HCT116 (cell line): ENCODE measurements at regions of chr11 and their contacts with region 1.

Region 1: DNA sequence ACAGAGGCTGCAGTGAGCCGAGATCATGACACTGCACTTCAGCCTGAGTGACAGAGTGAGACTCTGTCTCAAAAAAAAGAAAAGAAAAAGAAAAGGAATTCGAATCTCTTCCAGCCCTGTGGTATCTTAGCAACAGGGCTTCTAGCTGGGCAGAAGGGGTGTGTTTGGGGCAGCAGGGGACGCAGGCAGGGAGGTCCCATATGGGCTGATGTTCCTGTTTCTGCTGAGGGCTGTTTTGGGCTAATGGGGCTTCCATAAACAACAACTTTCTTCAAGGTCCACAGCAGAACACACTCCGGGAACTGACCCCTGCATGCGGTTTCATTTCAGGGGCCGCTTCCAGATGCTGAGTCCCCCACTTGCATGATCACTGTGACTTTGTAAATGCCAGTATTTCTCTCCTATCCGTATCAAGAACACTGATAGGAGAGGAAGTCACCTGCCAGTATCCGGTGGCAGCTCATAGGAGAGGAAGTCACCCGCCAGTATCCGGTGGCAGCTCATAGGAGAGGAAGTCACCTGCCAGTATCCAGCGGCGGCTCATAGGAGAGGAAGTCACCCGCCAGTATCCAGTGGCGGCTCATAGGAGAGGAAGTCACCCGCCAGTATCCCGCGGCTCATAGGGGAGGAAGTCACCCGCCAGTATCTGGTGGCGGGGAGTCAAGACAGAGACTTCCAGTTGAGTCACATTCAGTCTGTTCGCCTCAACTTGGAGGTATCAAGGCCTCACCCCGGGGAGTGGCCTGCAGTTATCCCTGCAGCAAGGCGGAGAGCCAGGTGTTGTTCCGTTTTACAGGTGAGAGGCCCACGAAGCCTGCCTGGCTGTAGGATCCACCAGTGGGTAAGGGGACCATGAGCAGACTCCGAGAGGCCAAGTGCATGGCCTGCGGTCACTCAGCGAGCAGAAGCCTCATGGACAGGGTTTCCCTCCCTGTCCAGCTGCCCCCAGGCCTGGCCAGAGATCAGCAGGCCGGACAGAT is 8.3 kb upstream of the FGF19 start:
- DNase-seq: peak; percentile 75
- ATAC-seq: peak; percentile 88
- H3K4me3 ChIP-seq: peak overlapping the region; percentile 91 to 97
- H3K27ac ChIP-seq: peak overlapping the region; percentile 88
- H3K4me1 ChIP-seq: peaks cover 13 to 20% of the 10 kb centered on the region in 2 experiments
- H3K27me3 ChIP-seq: no peaks in the 10 kb centered on the region
- CTCF ChIP-seq: no peak
- POLR2A ChIP-seq: peak; percentile 90
- RAD21 ChIP-seq: no peak

Region 2: GRCh38 chr11:69700278-69701140 is 11.6 kb before region 1 on chr11:
- CTCF ChIA-PET with region 1: interaction called, 5 read pairs
- POLR2A ChIA-PET with region 1: interaction called, 12 read pairs
- RAD21 ChIA-PET with region 1: interaction called in 1 of 2 experiments, 5 read pairs
- intact Hi-C with region 1: no loop called
- DNase-seq: no peak
- ATAC-seq: peak; percentile 39
- H3K4me3 ChIP-seq: peak overlapping the region; percentile 0 to 40
- H3K27ac ChIP-seq: peak overlapping the region; percentile 80
- H3K4me1 ChIP-seq: peaks cover 46 to 68% of the 10 kb centered on the region in 2 experiments
- H3K27me3 ChIP-seq: no peaks in the 10 kb centered on the region
- CTCF ChIP-seq: no peak
- POLR2A ChIP-seq: no peak
- RAD21 ChIP-seq: no peak

Region 3: DNA sequence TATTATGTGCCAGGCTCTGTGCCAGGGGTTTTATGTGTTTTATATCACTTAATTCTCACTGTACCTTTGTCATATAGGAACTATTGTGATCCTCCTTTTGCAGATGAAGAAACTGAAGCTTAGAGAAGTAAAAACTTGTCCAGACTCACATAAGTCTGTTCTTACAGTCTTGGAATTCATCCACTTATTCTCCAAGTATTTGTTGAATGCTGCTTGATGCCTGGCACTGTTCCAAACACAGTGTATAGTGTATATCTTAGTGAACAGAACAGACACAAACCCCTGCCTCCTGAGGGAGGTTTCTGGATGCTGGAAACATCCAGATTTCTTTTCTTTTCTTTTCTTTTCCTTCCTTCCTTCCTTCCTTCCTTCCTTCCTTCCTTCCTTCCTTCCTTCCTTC is 136.1 kb after region 1 on chr11:
- CTCF ChIA-PET with region 1: no interaction called
- POLR2A ChIA-PET with region 1: no interaction called
- RAD21 ChIA-PET with region 1: no interaction called
- intact Hi-C with region 1: no loop called
- DNase-seq: no peak
- ATAC-seq: no peak
- H3K4me3 ChIP-seq: no peak overlapping the region
- H3K27ac ChIP-seq: no peak overlapping the region
- H3K4me1 ChIP-seq: peaks cover 0 to 1% of the 10 kb centered on the region in 2 experiments; a peak in 1 of 4 replicates
- H3K27me3 ChIP-seq: no peaks in the 10 kb centered on the region
- CTCF ChIP-seq: no peak
- POLR2A ChIP-seq: no peak
- RAD21 ChIP-seq: no peak

Region 4: DNA sequence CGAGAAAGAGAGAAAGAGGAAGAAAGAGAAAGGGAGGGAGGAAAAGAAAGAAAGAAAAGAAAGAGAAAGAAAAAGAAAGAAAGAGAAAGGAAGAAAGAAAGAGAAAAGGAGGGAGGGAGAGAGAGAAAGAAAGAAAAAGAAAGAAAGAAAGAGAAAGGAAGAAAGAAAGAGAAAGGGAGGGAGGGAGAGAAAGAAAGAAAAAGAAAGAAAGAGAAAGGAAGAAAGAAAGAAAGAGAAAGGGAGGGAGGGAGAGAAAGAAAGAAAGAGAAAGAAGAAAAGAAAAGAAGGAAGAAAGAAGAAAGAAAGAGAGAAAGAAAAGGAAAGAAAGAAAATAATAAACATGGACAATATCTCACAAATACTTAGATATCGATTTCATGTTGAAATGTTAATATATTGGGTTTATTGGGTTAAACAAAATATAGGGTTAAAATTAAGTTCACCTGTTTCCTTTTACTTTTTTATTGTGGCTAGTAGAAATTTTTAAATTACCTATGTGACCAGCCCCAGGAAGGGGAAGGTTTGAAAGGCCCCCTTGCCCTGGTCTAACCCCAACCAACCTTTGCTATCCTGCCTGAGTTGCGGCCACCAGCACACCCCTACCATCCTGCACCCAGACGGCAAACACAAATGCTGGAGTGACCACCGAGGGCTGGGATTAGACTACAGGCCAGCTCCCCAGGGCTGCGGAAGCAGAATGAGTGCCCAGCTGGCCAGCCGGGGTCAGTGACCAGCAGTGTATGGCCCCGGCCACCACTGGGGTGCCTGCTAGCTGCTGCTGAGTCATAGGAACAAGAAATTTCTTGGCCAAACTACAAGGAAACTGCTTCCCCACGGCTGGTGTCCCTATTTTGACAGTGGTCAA is 188.1 kb after region 1 on chr11:
- CTCF ChIA-PET with region 1: interaction called, 3 read pairs
- POLR2A ChIA-PET with region 1: interaction called, 3 read pairs
- RAD21 ChIA-PET with region 1: no interaction called
- intact Hi-C with region 1: loop called (anchors 5 kb)
- DNase-seq: no peak
- ATAC-seq: peak; percentile 74
- H3K4me3 ChIP-seq: no peak overlapping the region
- H3K27ac ChIP-seq: no peak overlapping the region
- H3K4me1 ChIP-seq: peaks cover 8 to 11% of the 10 kb centered on the region in 2 experiments
- H3K27me3 ChIP-seq: no peaks in the 10 kb centered on the region
- CTCF ChIP-seq: no peak
- POLR2A ChIP-seq: no peak
- RAD21 ChIP-seq: no peak